ENCODE measurements at regions of chr9 and their contacts with region 1.

Region 1: DNA sequence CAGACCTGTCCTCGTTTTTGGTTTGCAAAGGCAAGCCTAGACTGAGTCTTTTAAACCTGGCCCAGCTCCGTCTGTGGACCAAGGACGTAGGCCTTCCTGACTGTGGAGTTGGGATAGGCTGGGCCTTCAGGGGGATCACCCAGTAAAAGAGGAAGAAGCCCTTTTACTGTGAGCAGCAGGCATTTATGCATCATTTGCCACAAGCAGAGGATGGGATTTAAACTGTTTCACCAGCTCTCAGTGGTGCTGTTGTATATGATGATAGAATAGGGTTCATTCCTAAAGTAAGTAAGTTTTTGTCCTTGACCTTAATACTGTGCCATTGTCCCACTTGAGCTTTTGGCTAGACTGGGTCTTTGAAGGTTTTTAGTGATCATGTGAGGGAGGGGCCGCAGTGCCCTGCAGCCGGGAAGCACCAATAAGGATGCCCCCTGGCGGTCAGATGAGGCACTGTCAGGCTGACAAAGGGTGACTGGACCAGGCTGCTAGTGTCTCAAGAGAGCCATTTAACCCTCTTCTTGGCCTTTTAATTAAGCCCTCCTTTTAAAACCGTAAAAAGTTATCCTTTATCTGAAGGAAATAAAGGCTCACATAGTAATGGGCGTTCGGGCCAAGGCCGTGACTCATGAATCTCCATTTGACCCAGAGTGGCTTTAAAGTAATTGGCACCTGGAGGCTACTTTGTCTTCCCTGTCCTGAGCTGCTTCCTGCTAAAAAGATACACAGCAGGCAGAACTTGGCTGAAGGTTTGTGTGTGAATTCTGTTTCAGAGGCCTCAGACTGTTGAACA is 74.0 kb downstream of the UBAP1 start:
- DNase-seq: peak; percentile 72
- H3K4me3 ChIP-seq: peak overlapping the region in 1 of 2 experiments; percentile 16; a peak in 1 of 4 replicates
- H3K27ac ChIP-seq: peak overlapping the region; percentile 34 to 69; a peak in 3 of 4 replicates
- H3K4me1 ChIP-seq: peaks cover 17 to 25% of the 10 kb centered on the region in 2 experiments; a peak in 3 of 4 replicates
- H3K27me3 ChIP-seq: no peaks in the 10 kb centered on the region
- CTCF ChIP-seq: peak; percentile 89
- EP300 ChIP-seq: no peak
- RAD21 ChIP-seq: peak; percentile 57

Region 2: DNA sequence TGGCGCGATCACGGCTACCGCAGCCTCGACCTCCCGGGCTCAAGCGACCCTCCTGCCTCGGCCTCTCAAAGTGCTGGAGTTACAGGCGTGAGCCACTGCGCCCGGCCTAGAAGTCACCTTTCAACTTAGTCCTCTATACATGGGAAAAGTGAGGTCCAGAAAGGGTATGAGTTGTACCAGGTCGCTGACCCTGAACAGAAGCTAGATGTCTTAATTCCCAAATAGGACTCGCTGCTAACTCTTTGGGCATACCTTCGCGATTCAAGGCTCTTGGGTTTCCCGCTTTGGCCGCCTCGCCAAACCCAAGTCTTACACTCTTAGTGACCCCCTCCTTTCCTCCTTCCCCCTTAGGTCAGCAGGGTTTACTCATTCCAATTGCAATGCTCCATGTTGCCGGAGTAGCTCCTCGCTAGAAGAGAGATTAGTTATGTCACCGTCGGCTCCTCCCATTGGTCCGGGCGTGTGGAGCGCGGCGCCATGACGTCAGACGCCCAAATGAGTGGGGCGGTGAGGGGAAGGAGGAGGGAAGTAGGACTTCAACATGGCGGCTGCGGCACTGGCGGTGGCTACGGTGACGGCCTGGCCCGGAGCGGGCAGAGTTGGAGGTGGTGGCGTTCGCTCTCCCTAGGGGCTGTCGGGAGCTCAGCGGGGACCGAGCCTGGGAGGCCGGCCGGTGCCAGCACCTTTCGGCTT is 74.2 kb before region 1 on chr9 and contains the start of gene UBAP1:
- CTCF ChIA-PET with region 1: interaction called, 13 read pairs
- POLR2A ChIA-PET with region 1: interaction called, 3 read pairs
- DNase-seq: peak; percentile 93
- H3K4me3 ChIP-seq: peak within 1 kb of the TSS; percentile 67 to 79
- H3K27ac ChIP-seq: peak within 1 kb of the TSS; percentile 78 to 87
- H3K4me1 ChIP-seq: no peaks in the 10 kb centered on the region; a peak in 1 of 4 replicates
- H3K27me3 ChIP-seq: no peaks in the 10 kb centered on the region
- CTCF ChIP-seq: no peak
- EP300 ChIP-seq: peak in 1 of 2 experiments; percentile 10; a peak in 1 of 4 replicates
- RAD21 ChIP-seq: no peak
- polyA plus RNA-seq, gene UBAP1: 26.3 and 31.7 TPM in 2 replicates

Region 3: DNA sequence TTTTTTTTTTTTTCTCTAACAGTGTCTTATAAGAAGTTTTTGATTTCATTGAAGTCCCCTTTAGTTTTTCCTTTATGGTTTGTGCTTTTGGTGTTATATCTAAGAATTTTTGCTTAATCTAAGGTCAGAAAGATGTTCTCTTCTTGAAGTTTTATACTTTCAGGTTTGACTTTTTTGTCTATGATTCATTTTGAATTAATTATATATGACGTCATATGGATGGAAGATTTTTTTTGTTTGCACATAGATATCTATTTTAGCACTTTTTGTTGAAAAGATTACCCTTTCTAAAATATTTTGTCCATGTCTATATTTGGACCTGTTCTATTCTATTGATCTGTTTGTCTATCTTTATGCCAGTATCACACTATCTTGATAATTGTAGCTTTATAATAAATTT is 57.7 kb before region 1 on chr9:
- CTCF ChIA-PET with region 1: no interaction called
- POLR2A ChIA-PET with region 1: no interaction called
- DNase-seq: no peak
- H3K4me3 ChIP-seq: no peak overlapping the region
- H3K27ac ChIP-seq: no peak overlapping the region
- H3K4me1 ChIP-seq: peaks cover 0 to 4% of the 10 kb centered on the region in 2 experiments; a peak in 1 of 4 replicates
- H3K27me3 ChIP-seq: no peaks in the 10 kb centered on the region
- CTCF ChIP-seq: no peak
- EP300 ChIP-seq: no peak
- RAD21 ChIP-seq: no peak

Region 4: DNA sequence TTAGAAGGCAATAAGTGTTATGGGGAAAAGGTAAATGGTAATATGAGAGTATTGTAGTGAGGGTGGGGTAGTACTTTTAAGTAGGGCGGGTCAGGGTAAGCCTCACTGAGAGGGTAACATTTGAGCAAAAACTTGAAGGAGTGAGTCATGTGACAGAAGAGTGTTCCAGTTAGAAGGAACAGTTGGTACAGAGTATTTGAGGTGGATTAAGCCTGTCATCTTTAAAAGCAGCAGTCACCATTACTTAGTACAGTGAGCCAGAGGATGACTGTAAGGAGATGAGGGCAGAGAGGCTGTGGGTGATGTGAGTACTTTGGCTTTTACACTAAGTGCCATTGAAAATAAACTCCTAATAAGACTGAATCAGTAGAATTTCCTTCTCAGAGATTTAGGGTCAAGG is 19.2 kb before region 1 on chr9:
- CTCF ChIA-PET with region 1: interaction called, 24 read pairs
- POLR2A ChIA-PET with region 1: no interaction called
- DNase-seq: no peak
- H3K4me3 ChIP-seq: no peak overlapping the region
- H3K27ac ChIP-seq: no peak overlapping the region
- H3K4me1 ChIP-seq: no peaks in the 10 kb centered on the region
- H3K27me3 ChIP-seq: no peaks in the 10 kb centered on the region
- CTCF ChIP-seq: no peak
- EP300 ChIP-seq: no peak
- RAD21 ChIP-seq: no peak

Region 5: GRCh38 chr9:34267660-34268059 is 14.8 kb after region 1 on chr9:
- CTCF ChIA-PET with region 1: interaction called, 20 read pairs
- POLR2A ChIA-PET with region 1: no interaction called
- DNase-seq: no peak
- H3K4me3 ChIP-seq: no peak overlapping the region
- H3K27ac ChIP-seq: no peak overlapping the region
- H3K4me1 ChIP-seq: peaks cover 0 to 2% of the 10 kb centered on the region in 2 experiments; a peak in 1 of 4 replicates
- H3K27me3 ChIP-seq: no peaks in the 10 kb centered on the region
- CTCF ChIP-seq: no peak
- EP300 ChIP-seq: no peak
- RAD21 ChIP-seq: no peak